Activated B cell treated with CpG ODN at 0.5 μM for 24 hours (primary cell): ENCODE measurements at regions of chr5 and their contacts with region 1.

Region 1: DNA sequence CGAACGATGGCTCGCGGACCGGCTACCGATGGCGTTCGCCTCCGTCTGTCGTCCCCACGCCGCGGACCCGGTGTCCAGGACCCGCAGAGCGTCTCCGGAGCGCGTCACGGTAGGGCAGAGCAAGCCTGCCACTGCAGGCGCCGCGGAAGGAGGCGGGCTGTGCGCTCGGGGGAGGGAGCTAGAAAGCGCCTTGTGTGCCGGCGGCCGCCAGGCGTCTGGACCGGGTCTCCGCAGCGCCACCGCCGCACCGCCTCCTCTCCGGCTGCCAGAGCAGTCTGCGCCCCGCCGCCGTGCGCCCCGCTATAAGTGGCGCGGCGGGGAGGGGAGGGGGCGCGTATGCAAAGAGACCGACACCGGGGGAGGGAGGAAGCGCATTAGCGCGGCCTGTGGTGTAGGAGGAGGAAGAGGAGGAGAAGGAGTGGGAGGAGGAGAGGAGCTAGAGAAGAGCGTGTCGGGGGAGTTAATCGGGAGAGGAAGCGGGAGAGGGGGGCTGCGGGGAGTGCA is at the start of gene ENC1:
- DNase-seq: peak; percentile 76
- ATAC-seq: peak; percentile 79
- H3K4me3 Mint-ChIP-seq: peak within 1 kb of the TSS; percentile 91
- H3K27ac Mint-ChIP-seq: peak within 1 kb of the TSS; percentile 69
- H3K4me1 Mint-ChIP-seq: peaks cover 32% of the 10 kb centered on the region
- H3K27me3 Mint-ChIP-seq: peaks cover 3% of the 10 kb centered on the region
- CTCF ChIP-seq: no peak
- total RNA-seq, gene ENC1: 6.6 and 7.2 TPM in 2 replicates

Region 2: GRCh38 chr5:73902327-73903051 is 738.0 kb before region 1 on chr5:
- CTCF ChIA-PET with region 1: interaction called, 30 read pairs
- POLR2A ChIA-PET with region 1: no interaction called
- intact Hi-C with region 1: loop called (anchors 1 kb)
- DNase-seq: no peak
- ATAC-seq: no peak
- H3K4me3 Mint-ChIP-seq: no peak overlapping the region
- H3K27ac Mint-ChIP-seq: no peak overlapping the region
- H3K4me1 Mint-ChIP-seq: peaks cover 5% of the 10 kb centered on the region
- H3K27me3 Mint-ChIP-seq: peaks cover 15% of the 10 kb centered on the region
- CTCF ChIP-seq: peak; percentile 69

Region 3: GRCh38 chr5:74294231-74294705 is 346.2 kb before region 1 on chr5:
- CTCF ChIA-PET with region 1: no interaction called
- POLR2A ChIA-PET with region 1: no interaction called
- intact Hi-C with region 1: loop called (anchors 10 kb)
- DNase-seq: no peak
- ATAC-seq: no peak
- H3K4me3 Mint-ChIP-seq: no peak overlapping the region
- H3K27ac Mint-ChIP-seq: no peak overlapping the region
- H3K4me1 Mint-ChIP-seq: no peaks in the 10 kb centered on the region
- H3K27me3 Mint-ChIP-seq: peaks cover 4% of the 10 kb centered on the region
- CTCF ChIP-seq: no peak

Region 4: DNA sequence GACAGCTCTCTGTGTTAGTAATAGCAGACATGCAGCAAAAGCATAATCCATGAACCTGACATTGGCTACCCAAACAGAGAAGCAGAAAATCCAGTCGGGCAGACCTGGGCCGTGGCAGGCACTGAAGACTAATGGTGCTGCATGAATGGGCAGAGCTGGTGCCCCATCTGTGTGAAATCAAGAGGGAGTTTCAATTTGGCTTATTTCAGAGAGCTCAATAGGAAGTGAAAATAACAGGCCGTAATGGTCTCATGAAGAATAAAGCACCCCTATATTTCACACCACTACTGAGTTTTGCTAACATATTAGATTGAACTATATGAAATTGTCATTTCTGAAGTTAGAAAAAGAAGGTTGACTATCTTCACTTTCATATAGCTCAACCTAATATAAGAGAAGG is 149.7 kb before region 1 on chr5:
- CTCF ChIA-PET with region 1: interaction called, 3 read pairs
- POLR2A ChIA-PET with region 1: interaction called, 3 read pairs
- intact Hi-C with region 1: loop called (anchors 2 kb)
- DNase-seq: no peak
- ATAC-seq: peak; percentile 99
- H3K4me3 Mint-ChIP-seq: no peak overlapping the region
- H3K27ac Mint-ChIP-seq: peak overlapping the region; percentile 16
- H3K4me1 Mint-ChIP-seq: peaks cover 20% of the 10 kb centered on the region
- H3K27me3 Mint-ChIP-seq: peaks cover 14% of the 10 kb centered on the region
- CTCF ChIP-seq: no peak

Region 5: DNA sequence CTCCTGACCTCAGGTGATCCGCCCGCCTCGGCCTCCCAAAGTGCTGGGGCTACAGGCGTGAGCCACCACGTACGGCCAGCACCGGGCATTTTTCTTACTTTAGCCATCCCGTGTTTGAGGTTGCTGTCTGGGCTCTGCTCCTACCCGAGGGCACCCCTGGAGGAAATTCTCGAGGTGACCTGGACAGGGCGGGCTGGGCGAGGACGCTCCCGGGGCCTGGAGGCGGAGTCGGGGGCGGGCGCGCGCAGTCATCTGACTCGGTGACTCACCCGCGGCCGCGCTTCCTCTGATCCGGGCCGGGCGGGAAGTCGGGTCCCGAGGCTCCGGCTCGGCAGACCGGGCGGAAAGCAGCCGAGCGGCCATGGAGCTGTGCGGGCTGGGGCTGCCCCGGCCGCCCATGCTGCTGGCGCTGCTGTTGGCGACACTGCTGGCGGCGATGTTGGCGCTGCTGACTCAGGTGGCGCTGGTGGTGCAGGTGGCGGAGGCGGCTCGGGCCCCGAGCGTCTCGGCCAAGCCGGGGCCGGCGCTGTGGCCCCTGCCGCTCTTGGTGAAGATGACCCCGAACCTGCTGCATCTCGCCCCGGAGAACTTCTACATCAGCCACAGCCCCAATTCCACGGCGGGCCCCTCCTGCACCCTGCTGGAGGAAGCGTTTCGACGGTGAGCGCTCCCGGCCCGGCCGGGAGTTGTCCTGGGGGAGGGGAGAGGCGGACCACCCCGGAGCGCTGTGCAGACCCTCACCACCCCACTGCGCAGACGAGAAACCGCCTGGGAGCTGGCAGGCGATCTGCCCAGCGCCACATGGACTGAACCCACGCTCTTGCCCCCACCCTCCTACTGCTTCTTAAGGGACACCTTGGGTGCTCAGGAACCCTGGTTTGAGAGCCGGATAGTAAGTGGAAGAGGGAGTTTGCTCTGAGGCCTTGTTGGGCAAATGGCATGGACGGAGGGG is 44.7 kb after region 1 on chr5 and contains the start of gene HEXB:
- CTCF ChIA-PET with region 1: no interaction called
- POLR2A ChIA-PET with region 1: interaction called, 3 read pairs
- intact Hi-C with region 1: loop called (anchors 2 kb)
- DNase-seq: peak; percentile 77
- ATAC-seq: peak; percentile 86
- H3K4me3 Mint-ChIP-seq: peak within 1 kb of the TSS; percentile 81
- H3K27ac Mint-ChIP-seq: peak within 1 kb of the TSS; percentile 63
- H3K4me1 Mint-ChIP-seq: peaks cover 18% of the 10 kb centered on the region
- H3K27me3 Mint-ChIP-seq: no peaks in the 10 kb centered on the region
- CTCF ChIP-seq: no peak
- total RNA-seq, gene HEXB: 34.5 and 43.2 TPM in 2 replicates

Region 6: DNA sequence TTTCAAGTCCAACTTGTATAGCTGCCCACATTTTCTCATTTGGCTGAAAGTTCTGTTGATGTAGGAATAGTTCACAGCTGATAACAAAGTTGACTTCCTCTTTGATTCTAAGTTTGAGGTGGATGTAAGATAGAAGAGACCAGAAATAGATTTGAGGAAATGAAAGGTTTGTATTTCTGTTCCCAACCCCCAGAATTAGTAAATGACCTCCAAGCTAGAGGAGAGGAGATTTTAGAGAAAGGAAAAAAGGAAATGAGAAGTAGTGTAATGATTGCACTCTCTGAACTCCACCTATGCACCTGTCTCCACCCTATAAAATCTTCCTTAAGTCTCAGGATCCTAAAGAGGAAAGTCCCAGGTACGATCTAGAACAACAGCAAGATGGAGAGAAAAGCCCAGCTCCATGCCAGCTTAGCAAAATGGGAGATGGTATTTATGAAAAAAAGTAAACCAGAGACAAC is 1207.1 kb after region 1 on chr5:
- CTCF ChIA-PET with region 1: no interaction called
- POLR2A ChIA-PET with region 1: no interaction called
- intact Hi-C with region 1: loop called (anchors 10 kb)
- DNase-seq: no peak
- ATAC-seq: peak; percentile 89
- H3K4me3 Mint-ChIP-seq: peak overlapping the region; percentile 50
- H3K27ac Mint-ChIP-seq: peak overlapping the region; percentile 82
- H3K4me1 Mint-ChIP-seq: peaks cover 45% of the 10 kb centered on the region
- H3K27me3 Mint-ChIP-seq: no peaks in the 10 kb centered on the region
- CTCF ChIP-seq: no peak